CD4-positive, alpha-beta memory T cell (primary cell): ENCODE measurements at regions of chr7 and their contacts with region 1.

Region 1: GRCh38 chr7:142811154-142811737 is 40.5 kb downstream of the PRSS2 start:
- DNase-seq: peak; percentile 64 to 82 (median 79)
- H3K4me3 ChIP-seq: no peak overlapping the region
- H3K4me3 Mint-ChIP-seq: peak overlapping the region in 7 of 8 donors; percentile 57 to 79 (median 71)
- H3K27ac ChIP-seq: peak overlapping the region; percentile 99
- H3K27ac Mint-ChIP-seq: peak overlapping the region; percentile 92 to 100 (median 100)
- H3K4me1 ChIP-seq: peaks cover 79% of the 10 kb centered on the region
- H3K4me1 Mint-ChIP-seq: peaks cover 48 to 76% (median 73%) of the 10 kb centered on the region in 4 donors
- H3K27me3 ChIP-seq: no peaks in the 10 kb centered on the region
- H3K27me3 Mint-ChIP-seq: no peaks in the 10 kb centered on the region

Region 2: DNA sequence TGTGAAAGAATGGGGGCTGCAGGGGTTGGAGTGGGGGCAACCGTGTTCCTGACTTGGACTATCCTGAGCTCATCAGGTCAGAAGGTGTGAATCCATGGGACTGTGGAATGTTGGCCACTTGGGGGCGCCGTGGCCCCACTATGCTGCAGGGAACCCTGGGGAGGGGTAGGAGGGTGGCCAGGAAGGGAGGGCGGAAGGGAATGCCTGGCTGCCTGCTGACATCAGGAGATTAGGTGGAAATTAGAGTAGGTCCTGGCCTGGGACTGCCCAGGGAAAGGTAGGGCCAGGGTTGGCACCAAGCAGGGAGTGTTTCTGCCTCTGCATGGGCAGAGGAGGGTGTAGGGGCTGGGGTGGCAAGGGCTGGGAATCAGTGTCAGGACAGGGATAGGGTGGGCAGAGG is 487.5 kb before region 1 on chr7:
- CTCF ChIA-PET with region 1: interaction called, 15 read pairs
- POLR2A ChIA-PET with region 1: interaction called, 116 read pairs
- intact Hi-C with region 1: loop called (anchors 1 kb)
- DNase-seq: peak in 2 of 5 donors; percentile 31 to 37
- H3K4me3 ChIP-seq: no peak overlapping the region
- H3K4me3 Mint-ChIP-seq: peak overlapping the region in 4 of 8 donors; percentile 6 to 69 (median 18)
- H3K27ac ChIP-seq: no peak overlapping the region
- H3K27ac Mint-ChIP-seq: peak overlapping the region; percentile 56 to 91 (median 71)
- H3K4me1 ChIP-seq: peaks cover 25% of the 10 kb centered on the region
- H3K4me1 Mint-ChIP-seq: peaks cover 13 to 34% (median 19%) of the 10 kb centered on the region in 4 donors
- H3K27me3 ChIP-seq: no peaks in the 10 kb centered on the region
- H3K27me3 Mint-ChIP-seq: peaks cover 0 to 3% of the 10 kb centered on the region in 2 donors

Region 3: GRCh38 chr7:142445019-142445686 is 366.1 kb before region 1 on chr7:
- CTCF ChIA-PET with region 1: interaction called, 9 read pairs
- POLR2A ChIA-PET with region 1: interaction called, 21 read pairs
- intact Hi-C with region 1: loop called (anchors 5 kb)
- DNase-seq: peak in 4 of 5 donors; percentile 29 to 46 (median 38)
- H3K4me3 ChIP-seq: no peak overlapping the region
- H3K4me3 Mint-ChIP-seq: peak overlapping the region in 5 of 8 donors; percentile 25 to 53 (median 40)
- H3K27ac ChIP-seq: no peak overlapping the region
- H3K27ac Mint-ChIP-seq: peak overlapping the region; percentile 46 to 88 (median 73)
- H3K4me1 ChIP-seq: peaks cover 28% of the 10 kb centered on the region
- H3K4me1 Mint-ChIP-seq: peaks cover 20 to 42% (median 32%) of the 10 kb centered on the region in 4 donors
- H3K27me3 ChIP-seq: no peaks in the 10 kb centered on the region
- H3K27me3 Mint-ChIP-seq: no peaks in the 10 kb centered on the region

Region 4: GRCh38 chr7:142516038-142516501 is 295.2 kb before region 1 on chr7:
- CTCF ChIA-PET with region 1: interaction called, 6 read pairs
- POLR2A ChIA-PET with region 1: interaction called, 15 read pairs
- intact Hi-C with region 1: loop called (anchors 5 kb)
- DNase-seq: peak in 4 of 5 donors; percentile 33 to 46 (median 44)
- H3K4me3 ChIP-seq: no peak overlapping the region
- H3K4me3 Mint-ChIP-seq: peak overlapping the region in 4 of 8 donors; percentile 18 to 75 (median 30)
- H3K27ac ChIP-seq: no peak overlapping the region
- H3K27ac Mint-ChIP-seq: peak overlapping the region in 3 of 7 donors; percentile 9 to 67 (median 57)
- H3K4me1 ChIP-seq: peaks cover 34% of the 10 kb centered on the region
- H3K4me1 Mint-ChIP-seq: peaks cover 12 to 50% (median 29%) of the 10 kb centered on the region in 4 donors
- H3K27me3 ChIP-seq: no peaks in the 10 kb centered on the region
- H3K27me3 Mint-ChIP-seq: no peaks in the 10 kb centered on the region

Region 5: GRCh38 chr7:142620402-142620801 is 190.8 kb before region 1 on chr7:
- CTCF ChIA-PET with region 1: interaction called, 4 read pairs
- POLR2A ChIA-PET with region 1: interaction called, 43 read pairs
- intact Hi-C with region 1: no loop called
- DNase-seq: no peak
- H3K4me3 ChIP-seq: no peak overlapping the region
- H3K4me3 Mint-ChIP-seq: peak overlapping the region in 7 of 8 donors; percentile 33 to 73 (median 62)
- H3K27ac ChIP-seq: peak overlapping the region; percentile 41
- H3K27ac Mint-ChIP-seq: peak overlapping the region; percentile 78 to 89 (median 79)
- H3K4me1 ChIP-seq: no peaks in the 10 kb centered on the region
- H3K4me1 Mint-ChIP-seq: peaks cover under 1 to 5% (median 2%) of the 10 kb centered on the region in 4 donors
- H3K27me3 ChIP-seq: no peaks in the 10 kb centered on the region
- H3K27me3 Mint-ChIP-seq: peaks cover 0 to 3% of the 10 kb centered on the region in 2 donors

Region 6: DNA sequence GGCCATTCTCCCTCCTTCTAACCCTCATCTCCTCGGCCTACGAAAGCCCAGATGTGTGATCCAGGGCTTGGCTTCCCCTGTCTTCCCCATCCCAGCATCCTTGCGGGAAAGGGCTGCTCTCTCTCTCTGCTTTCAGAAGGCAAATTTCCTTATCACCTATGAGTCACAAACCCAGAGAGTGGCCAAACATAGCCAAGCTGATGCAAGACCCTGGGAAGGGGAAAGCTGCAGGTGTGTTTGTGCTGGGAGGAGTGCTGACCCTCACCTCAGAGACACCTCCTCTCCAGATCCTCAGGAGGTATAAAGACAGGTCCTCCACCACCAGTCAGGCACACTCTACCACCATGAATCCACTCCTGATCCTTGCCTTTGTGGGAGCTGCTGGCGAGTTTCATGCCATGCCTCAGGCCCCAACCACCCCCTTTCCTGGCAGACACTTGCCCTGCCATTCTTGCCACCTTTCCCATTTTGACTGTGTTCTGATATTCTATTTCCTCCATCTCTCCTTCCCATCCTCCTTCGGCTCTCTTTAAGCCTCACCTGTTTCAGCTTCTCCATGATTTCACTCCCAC is 51.1 kb before region 1 on chr7:
- CTCF ChIA-PET with region 1: no interaction called
- POLR2A ChIA-PET with region 1: no interaction called
- intact Hi-C with region 1: no loop called
- DNase-seq: no peak
- H3K4me3 ChIP-seq: no peak overlapping the region
- H3K4me3 Mint-ChIP-seq: no peak overlapping the region
- H3K27ac ChIP-seq: no peak overlapping the region
- H3K27ac Mint-ChIP-seq: peak overlapping the region in 1 of 7 donors; percentile 50
- H3K4me1 ChIP-seq: no peaks in the 10 kb centered on the region
- H3K4me1 Mint-ChIP-seq: no peaks in the 10 kb centered on the region
- H3K27me3 ChIP-seq: no peaks in the 10 kb centered on the region
- H3K27me3 Mint-ChIP-seq: no peaks in the 10 kb centered on the region

Region 7: GRCh38 chr7:142782922-142783900 is 28.0 kb before region 1 on chr7:
- CTCF ChIA-PET with region 1: interaction called, 623 read pairs
- POLR2A ChIA-PET with region 1: interaction called, 6,843 read pairs
- intact Hi-C with region 1: loop called (anchors 1 kb)
- DNase-seq: peak; percentile 73 to 82 (median 78)
- H3K4me3 ChIP-seq: peak overlapping the region in 1 of 2 donors; percentile 49
- H3K4me3 Mint-ChIP-seq: peak overlapping the region; percentile 81 to 90 (median 86)
- H3K27ac ChIP-seq: peak overlapping the region; percentile 21
- H3K27ac Mint-ChIP-seq: peak overlapping the region; percentile 92 to 100 (median 98)
- H3K4me1 ChIP-seq: peaks cover 17% of the 10 kb centered on the region
- H3K4me1 Mint-ChIP-seq: peaks cover 6 to 17% (median 7%) of the 10 kb centered on the region in 4 donors
- H3K27me3 ChIP-seq: no peaks in the 10 kb centered on the region
- H3K27me3 Mint-ChIP-seq: no peaks in the 10 kb centered on the region

Region 8: GRCh38 chr7:143248761-143249354 is 437.6 kb after region 1 on chr7:
- CTCF ChIA-PET with region 1: no interaction called
- POLR2A ChIA-PET with region 1: interaction called, 10 read pairs
- intact Hi-C with region 1: no loop called
- DNase-seq: no peak
- H3K4me3 ChIP-seq: no peak overlapping the region
- H3K4me3 Mint-ChIP-seq: peak overlapping the region in 7 of 8 donors; percentile 25 to 67 (median 47)
- H3K27ac ChIP-seq: no peak overlapping the region
- H3K27ac Mint-ChIP-seq: peak overlapping the region; percentile 24 to 90 (median 70)
- H3K4me1 ChIP-seq: peaks cover 93% of the 10 kb centered on the region
- H3K4me1 Mint-ChIP-seq: peaks cover 73 to 98% (median 84%) of the 10 kb centered on the region in 4 donors
- H3K27me3 ChIP-seq: no peaks in the 10 kb centered on the region
- H3K27me3 Mint-ChIP-seq: no peaks in the 10 kb centered on the region